HepG2 (cell line): ENCODE measurements at regions of chr9 and their contacts with region 1.

Region 1: DNA sequence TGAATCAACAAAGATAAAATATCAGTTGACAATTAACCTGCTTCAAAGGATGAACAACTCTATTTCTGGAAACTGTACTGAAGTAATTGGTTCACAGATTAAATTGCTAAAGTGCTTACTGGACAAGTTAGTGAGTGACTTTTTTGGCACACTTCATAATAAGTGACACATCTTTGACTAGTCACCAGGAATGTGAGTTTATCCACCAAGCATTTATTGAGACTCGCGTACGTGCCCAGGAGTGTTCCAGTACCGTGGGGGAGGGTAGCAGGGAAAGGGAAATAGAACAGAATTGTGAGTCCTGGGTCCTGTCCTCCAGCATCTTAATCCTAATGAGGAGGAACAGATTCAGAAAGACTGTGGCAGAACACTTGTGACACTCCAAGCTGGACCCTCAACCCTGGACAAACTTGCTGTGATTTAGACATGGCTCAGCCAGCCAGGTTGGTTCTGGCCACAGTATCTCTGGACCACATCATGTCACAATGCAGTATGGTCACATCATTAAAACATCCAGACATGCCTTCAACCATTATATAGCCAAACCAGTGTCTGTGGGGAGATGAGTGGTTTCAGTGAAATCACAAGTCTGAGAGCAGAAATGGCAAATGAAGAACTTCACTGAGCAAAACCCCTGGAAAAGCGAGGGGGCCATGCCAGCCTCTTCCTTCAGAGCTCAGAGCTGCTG is 623.1 kb downstream of the BNC2 start:
- DNase-seq: no peak
- ATAC-seq: no peak
- H3K4me3 ChIP-seq: no peak overlapping the region
- H3K27ac ChIP-seq: no peak overlapping the region
- H3K4me1 ChIP-seq: no peaks in the 10 kb centered on the region
- H3K27me3 ChIP-seq: no peaks in the 10 kb centered on the region
- CTCF ChIP-seq: no peak
- EP300 ChIP-seq: no peak
- POLR2A ChIP-seq: no peak
- RAD21 ChIP-seq: no peak

Region 2: DNA sequence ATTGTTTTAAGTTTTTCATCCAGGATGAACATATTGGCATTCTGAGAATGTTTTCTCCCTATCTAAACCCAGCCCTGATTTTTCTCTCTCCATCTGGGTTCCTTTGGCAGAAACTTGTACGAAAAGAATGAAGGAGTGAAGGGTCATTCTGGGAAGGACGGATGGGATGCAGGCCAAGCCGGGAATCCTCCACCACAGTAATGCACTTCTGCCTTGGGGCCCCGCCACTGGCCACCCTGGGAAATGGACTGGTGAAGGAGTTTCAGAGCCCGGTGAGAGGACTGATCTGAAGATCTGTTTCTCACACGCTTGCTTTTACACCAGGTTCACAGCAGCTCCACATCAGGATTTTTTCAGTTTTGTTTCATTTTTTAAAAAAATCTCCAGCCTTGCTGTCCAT is 68.4 kb after region 1 on chr9:
- CTCF ChIA-PET with region 1: no interaction called
- POLR2A ChIA-PET with region 1: no interaction called
- in situ Hi-C with region 1: no loop called
- intact Hi-C with region 1: loop called (anchors 2 kb)
- DNase-seq: no peak
- ATAC-seq: no peak
- H3K4me3 ChIP-seq: no peak overlapping the region
- H3K27ac ChIP-seq: no peak overlapping the region
- H3K4me1 ChIP-seq: no peaks in the 10 kb centered on the region
- H3K27me3 ChIP-seq: peaks cover 2 to 9% of the 10 kb centered on the region in 2 experiments; a peak in 3 of 5 replicates
- CTCF ChIP-seq: no peak
- EP300 ChIP-seq: no peak
- POLR2A ChIP-seq: no peak
- RAD21 ChIP-seq: no peak